HepG2 (cell line): ENCODE measurements at regions of chr2 and their contacts with region 1.

Region 1: DNA sequence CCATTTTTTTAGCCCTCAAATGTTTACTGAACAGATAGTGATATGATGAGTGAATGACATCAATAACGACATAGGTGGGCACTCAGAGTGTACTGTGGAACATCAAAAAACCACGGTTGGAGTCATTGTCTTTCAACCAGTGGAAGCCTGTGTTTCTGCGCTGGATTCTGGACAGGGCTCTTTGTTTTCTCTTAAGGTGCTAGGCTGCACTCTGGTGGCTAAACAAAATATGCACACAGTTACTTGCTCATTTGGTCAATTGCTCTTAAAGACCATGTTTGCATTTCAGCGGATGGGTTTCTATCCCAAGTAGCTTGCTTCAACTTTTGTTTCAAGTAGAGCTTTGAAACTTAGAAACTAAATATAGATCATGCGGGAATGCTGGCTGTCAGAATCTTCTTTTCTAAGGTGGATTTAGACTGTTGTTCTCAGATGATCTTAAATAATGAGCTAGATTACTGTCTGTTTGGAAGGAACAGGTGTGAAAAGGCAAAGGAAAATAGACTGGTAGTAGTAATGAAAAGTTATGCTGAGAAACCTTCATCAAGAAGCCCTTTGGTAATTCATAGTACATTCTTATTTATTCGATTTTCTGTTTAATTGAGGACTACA is 48.5 kb upstream of the LYPD6B start:
- DNase-seq: peak; percentile 82
- ATAC-seq: peak; percentile 99
- H3K4me3 ChIP-seq: no peak overlapping the region
- H3K27ac ChIP-seq: no peak overlapping the region
- H3K4me1 ChIP-seq: no peaks in the 10 kb centered on the region
- H3K27me3 ChIP-seq: peaks cover 0 to 1% of the 10 kb centered on the region in 2 experiments; a peak in 3 of 5 replicates
- CTCF ChIP-seq: peak; percentile 81
- EP300 ChIP-seq: no peak
- POLR2A ChIP-seq: no peak
- RAD21 ChIP-seq: peak; percentile 77

Region 2: DNA sequence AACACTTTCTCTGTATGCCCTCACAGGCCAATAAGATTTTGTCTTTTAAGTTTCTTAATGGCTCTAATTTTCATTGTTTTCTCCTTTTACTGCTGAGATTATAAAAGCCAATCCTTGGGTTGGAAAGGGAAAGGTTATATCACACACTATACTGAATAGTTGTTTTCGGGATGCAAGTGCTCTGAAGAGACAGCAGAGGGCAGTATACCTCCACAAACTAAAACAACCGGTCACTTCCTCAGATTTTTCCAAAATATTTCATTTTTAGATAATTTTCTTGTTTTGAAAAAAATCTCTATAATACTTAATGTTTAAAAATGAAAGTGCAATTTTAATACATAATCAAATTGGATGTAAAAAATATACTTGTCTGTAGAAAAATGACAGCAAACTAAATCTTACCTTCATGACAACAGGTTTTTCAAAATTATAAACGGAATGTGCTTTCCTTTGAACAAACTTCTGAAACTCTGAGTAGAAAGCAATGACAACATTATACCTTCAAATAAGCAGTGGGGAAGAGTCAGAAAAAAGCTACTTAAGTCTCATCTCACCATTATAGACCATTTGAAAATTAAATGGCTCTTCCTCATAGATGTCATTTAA is 1052.1 kb before region 1 on chr2:
- CTCF ChIA-PET with region 1: interaction called, 4 read pairs
- POLR2A ChIA-PET with region 1: no interaction called
- in situ Hi-C with region 1: loop called (anchors 25 kb)
- intact Hi-C with region 1: loop called (anchors 1 kb)
- DNase-seq: peak; percentile 40
- ATAC-seq: peak; percentile 77
- H3K4me3 ChIP-seq: no peak overlapping the region
- H3K27ac ChIP-seq: no peak overlapping the region
- H3K4me1 ChIP-seq: peaks cover 10% of the 10 kb centered on the region
- H3K27me3 ChIP-seq: no peaks in the 10 kb centered on the region
- CTCF ChIP-seq: peak; percentile 80
- EP300 ChIP-seq: no peak
- POLR2A ChIP-seq: no peak
- RAD21 ChIP-seq: peak; percentile 78; the same call in 1 of the 2 replicates

Region 3: DNA sequence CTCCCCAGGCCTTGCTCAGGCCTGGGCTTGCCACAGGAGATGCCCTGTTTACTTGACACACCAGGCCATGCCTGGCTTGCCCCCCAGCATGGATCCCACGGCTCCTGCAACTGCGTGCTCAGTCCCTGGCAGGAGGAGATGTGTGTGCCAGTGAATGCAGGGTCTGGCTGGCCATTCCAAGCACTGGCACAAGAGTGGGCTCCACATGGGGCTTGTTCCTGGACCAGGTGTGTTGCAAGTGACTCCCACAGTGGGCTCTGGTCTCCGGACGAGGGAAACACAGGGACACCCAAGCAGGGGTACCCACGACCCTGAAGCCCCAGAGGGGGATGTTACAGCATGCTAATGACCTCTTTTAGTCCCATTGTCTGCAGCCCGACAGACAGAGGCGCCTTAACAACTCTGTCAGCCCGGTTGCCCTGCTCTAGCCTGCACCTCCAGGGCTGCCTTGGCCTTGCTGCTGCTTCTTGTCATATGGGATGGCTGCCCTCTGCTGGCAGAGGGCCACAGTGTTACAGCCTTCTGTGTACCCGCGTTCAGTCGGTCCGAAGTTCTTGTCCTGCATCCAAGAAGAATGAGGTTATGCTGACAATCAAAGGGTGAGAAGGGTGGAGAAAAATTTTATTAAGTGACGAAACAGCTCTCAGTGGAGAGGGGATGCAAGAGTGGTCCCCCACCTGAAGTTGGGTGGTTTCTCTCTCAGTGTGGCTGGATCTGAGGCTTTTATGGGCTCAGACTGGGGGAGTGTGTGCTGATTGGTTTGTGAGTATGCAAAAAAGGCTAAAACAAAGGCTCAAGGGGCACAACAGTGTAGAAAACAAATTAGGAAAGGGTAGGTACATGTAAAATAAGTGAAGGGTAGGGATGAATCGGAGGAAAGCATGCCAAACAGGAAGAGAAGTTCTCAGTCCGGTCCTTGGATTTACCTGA is 788.6 kb before region 1 on chr2:
- CTCF ChIA-PET with region 1: no interaction called
- POLR2A ChIA-PET with region 1: no interaction called
- in situ Hi-C with region 1: no loop called
- intact Hi-C with region 1: loop called (anchors 5 kb)
- DNase-seq: peak; percentile 87
- ATAC-seq: peak; percentile 100
- H3K4me3 ChIP-seq: no peak overlapping the region
- H3K27ac ChIP-seq: no peak overlapping the region
- H3K4me1 ChIP-seq: peaks cover 11% of the 10 kb centered on the region
- H3K27me3 ChIP-seq: no peaks in the 10 kb centered on the region
- CTCF ChIP-seq: peak; percentile 98
- EP300 ChIP-seq: no peak
- POLR2A ChIP-seq: no peak
- RAD21 ChIP-seq: peak; percentile 92

Region 4: DNA sequence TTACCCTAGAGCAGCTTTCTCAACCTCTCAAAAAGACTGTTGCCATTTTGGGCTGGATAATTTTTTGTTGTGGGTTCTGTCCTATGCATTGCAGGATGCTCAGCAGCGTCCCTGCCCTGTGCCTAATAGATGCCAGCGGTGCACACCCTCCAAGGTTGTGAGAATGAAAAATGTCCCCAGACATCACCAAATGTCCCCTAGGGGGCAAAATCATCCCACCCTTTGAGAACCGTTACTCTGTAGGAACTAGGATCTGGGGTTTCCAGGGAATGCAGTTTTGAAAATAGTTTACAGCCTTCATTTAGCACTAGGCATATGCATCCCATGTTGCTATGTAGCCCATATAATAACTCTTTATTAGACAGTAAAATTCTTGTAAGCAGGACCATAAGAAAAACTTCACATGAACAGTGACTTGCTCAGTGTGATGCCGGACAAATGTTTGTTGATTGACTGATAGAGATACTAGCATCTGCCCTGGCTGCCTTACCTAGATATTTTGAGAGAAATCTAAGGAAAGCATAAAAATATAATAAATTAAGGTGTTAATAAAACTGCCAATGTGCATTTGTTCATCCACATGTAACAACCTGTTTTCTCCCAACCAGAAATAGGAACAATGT is 424.6 kb before region 1 on chr2:
- CTCF ChIA-PET with region 1: interaction called, 9 read pairs
- POLR2A ChIA-PET with region 1: no interaction called
- in situ Hi-C with region 1: no loop called
- intact Hi-C with region 1: loop called (anchors 1 kb)
- DNase-seq: no peak
- ATAC-seq: peak; percentile 72
- H3K4me3 ChIP-seq: no peak overlapping the region
- H3K27ac ChIP-seq: no peak overlapping the region
- H3K4me1 ChIP-seq: no peaks in the 10 kb centered on the region
- H3K27me3 ChIP-seq: peaks cover 2 to 59% of the 10 kb centered on the region in 2 experiments; a peak in 3 of 5 replicates
- CTCF ChIP-seq: peak; percentile 46
- EP300 ChIP-seq: no peak
- POLR2A ChIP-seq: no peak
- RAD21 ChIP-seq: no peak

Region 5: DNA sequence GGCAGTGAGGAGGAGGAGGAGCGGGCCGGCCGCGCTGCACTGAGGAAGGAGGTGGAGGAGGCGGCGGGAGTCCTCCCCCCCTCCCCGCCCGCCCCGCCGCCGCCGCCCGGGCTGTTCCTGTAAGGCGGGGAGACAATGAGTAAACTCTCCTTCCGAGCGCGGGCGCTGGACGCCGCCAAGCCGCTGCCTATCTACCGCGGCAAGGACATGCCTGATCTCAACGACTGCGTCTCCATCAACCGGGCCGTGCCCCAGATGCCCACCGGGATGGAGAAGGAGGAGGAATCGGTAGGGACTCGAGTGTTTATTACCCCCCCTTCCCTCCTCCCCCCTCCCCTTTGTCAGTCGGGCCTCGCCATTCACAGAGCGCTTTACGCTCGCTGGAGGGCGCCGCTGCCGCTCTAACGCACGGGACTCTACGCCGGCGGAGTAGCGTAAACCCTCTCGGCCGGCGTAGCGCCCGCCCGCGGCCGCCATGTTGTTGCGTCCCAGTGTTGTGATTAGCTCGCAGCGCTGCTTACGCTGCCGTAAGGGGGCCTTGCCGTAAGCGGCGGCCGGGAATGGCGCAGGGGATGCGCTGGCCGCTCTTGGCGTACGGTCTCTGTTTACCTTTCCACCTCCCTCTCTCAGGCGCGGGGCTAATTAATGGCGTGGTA is 345.0 kb before region 1 on chr2:
- CTCF ChIA-PET with region 1: no interaction called
- POLR2A ChIA-PET with region 1: no interaction called
- in situ Hi-C with region 1: loop called (anchors 25 kb)
- intact Hi-C with region 1: no loop called
- DNase-seq: peak; percentile 91
- ATAC-seq: peak; percentile 74
- H3K4me3 ChIP-seq: peak overlapping the region; percentile 91 to 94 (median 93)
- H3K27ac ChIP-seq: peak overlapping the region; percentile 91
- H3K4me1 ChIP-seq: peaks cover 46% of the 10 kb centered on the region
- H3K27me3 ChIP-seq: peaks cover 0 to 6% of the 10 kb centered on the region in 2 experiments; a peak in 3 of 5 replicates
- CTCF ChIP-seq: peak; percentile 67
- EP300 ChIP-seq: no peak
- POLR2A ChIP-seq: peak; percentile 64 to 87
- RAD21 ChIP-seq: no peak; the same call in 1 of the 2 replicates

Region 6: GRCh38 chr2:148829618-148830017 is 160.4 kb before region 1 on chr2:
- CTCF ChIA-PET with region 1: no interaction called
- POLR2A ChIA-PET with region 1: no interaction called
- in situ Hi-C with region 1: no loop called
- intact Hi-C with region 1: no loop called
- DNase-seq: no peak
- ATAC-seq: peak; percentile 90
- H3K4me3 ChIP-seq: no peak overlapping the region
- H3K27ac ChIP-seq: no peak overlapping the region
- H3K4me1 ChIP-seq: no peaks in the 10 kb centered on the region
- H3K27me3 ChIP-seq: peaks cover 2 to 25% of the 10 kb centered on the region in 2 experiments; a peak in 3 of 5 replicates
- CTCF ChIP-seq: no peak
- EP300 ChIP-seq: no peak
- POLR2A ChIP-seq: no peak
- RAD21 ChIP-seq: no peak

Region 7: GRCh38 chr2:148926291-148926961 is 63.6 kb before region 1 on chr2:
- CTCF ChIA-PET with region 1: interaction called, 3 read pairs
- POLR2A ChIA-PET with region 1: no interaction called
- in situ Hi-C with region 1: no loop called
- intact Hi-C with region 1: loop called (anchors 1 kb)
- DNase-seq: peak; percentile 48
- ATAC-seq: peak; percentile 94
- H3K4me3 ChIP-seq: no peak overlapping the region
- H3K27ac ChIP-seq: no peak overlapping the region
- H3K4me1 ChIP-seq: no peaks in the 10 kb centered on the region
- H3K27me3 ChIP-seq: no peaks in the 10 kb centered on the region; a peak in 1 of 5 replicates
- CTCF ChIP-seq: peak; percentile 77
- EP300 ChIP-seq: no peak
- POLR2A ChIP-seq: no peak
- RAD21 ChIP-seq: 0 out of 2 replicates have a peak, but pooled peaks have one; percentile 12

Region 8: DNA sequence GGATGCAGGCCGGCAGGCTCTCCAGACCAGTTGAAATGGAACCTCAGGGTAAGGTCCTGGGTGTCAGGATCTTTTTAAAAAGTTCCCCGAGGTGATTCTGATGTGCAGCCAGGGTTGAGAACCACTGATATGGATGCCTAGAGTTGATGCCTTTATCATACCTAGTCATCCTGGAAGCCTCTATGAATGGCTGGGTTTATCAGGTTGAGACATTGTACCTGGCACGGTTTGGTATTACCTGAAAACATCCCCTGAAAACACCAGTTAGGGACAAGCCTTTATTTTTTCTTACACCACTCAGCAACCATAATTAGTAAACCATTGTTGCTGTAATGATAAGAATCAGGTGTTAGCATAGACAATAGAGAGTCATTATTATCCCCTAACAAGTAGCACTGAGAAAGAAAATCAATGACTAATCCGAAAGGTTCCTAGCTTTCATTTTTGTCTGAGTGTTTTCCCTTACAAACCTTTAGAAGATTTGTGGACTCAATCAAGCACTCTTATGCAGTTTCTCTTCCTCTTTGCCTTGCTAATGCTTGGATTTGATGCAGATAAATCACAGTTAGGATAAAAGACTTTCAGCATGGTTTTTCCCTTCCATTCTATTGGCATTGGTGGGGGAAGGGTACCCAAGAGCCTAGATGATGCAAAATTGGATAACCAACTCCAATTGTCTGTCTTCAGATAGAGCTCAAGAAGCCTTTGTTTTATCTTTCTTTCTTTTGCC is 223.9 kb after region 1 on chr2:
- CTCF ChIA-PET with region 1: no interaction called
- POLR2A ChIA-PET with region 1: no interaction called
- in situ Hi-C with region 1: no loop called
- intact Hi-C with region 1: no loop called
- DNase-seq: no peak
- ATAC-seq: no peak
- H3K4me3 ChIP-seq: no peak overlapping the region
- H3K27ac ChIP-seq: no peak overlapping the region
- H3K4me1 ChIP-seq: no peaks in the 10 kb centered on the region
- H3K27me3 ChIP-seq: peaks cover 0 to 6% of the 10 kb centered on the region in 2 experiments; a peak in 1 of 5 replicates
- CTCF ChIP-seq: no peak
- EP300 ChIP-seq: no peak
- POLR2A ChIP-seq: no peak
- RAD21 ChIP-seq: no peak